ENCODE measurements at regions of chr13 and their contacts with region 1.

Region 1: DNA sequence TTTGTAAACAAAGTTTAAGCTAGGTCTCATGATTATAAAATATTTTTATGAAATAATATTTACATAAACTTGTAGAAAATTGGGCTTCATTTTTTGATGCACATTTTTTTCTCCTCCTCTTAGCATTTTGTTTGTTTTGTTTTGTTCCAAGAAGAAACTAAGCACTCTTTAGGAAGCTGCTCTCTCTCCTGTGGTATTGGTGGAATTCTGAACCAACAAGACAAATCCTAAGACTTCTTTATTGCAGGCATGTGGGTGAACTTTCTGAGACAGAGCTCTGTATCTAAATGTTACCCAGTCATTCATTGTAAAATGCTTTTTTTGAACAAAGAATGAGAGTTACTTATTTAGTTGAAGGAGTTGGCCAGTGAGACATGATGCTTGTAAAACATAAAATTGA is 39.3 kb downstream of the LMO7 start:
- DNase-seq: no peak
- ATAC-seq: no peak
- H3K4me3 ChIP-seq: no peak overlapping the region
- H3K27ac ChIP-seq: no peak overlapping the region
- H3K4me1 ChIP-seq: no peaks in the 10 kb centered on the region
- H3K27me3 ChIP-seq: no peaks in the 10 kb centered on the region
- CTCF ChIP-seq: no peak
- EP300 ChIP-seq: no peak
- POLR2A ChIP-seq: no peak
- RAD21 ChIP-seq: no peak

Region 2: GRCh38 chr13:75687150-75687763 is 11.8 kb after region 1 on chr13:
- CTCF ChIA-PET with region 1: interaction called, 17 read pairs
- POLR2A ChIA-PET with region 1: no interaction called
- RAD21 ChIA-PET with region 1: no interaction called
- SMC1A ChIA-PET with region 1: interaction called, 6 read pairs
- in situ Hi-C with region 1: no loop called
- intact Hi-C with region 1: no loop called
- DNase-seq: no peak
- ATAC-seq: peak; percentile 60
- H3K4me3 ChIP-seq: no peak overlapping the region
- H3K27ac ChIP-seq: no peak overlapping the region
- H3K4me1 ChIP-seq: no peaks in the 10 kb centered on the region
- H3K27me3 ChIP-seq: no peaks in the 10 kb centered on the region
- CTCF ChIP-seq: peak; percentile 23 to 39 (median 38); a peak in 5 of 6 replicates
- EP300 ChIP-seq: no peak
- POLR2A ChIP-seq: no peak
- RAD21 ChIP-seq: peak; percentile 47

Region 3: DNA sequence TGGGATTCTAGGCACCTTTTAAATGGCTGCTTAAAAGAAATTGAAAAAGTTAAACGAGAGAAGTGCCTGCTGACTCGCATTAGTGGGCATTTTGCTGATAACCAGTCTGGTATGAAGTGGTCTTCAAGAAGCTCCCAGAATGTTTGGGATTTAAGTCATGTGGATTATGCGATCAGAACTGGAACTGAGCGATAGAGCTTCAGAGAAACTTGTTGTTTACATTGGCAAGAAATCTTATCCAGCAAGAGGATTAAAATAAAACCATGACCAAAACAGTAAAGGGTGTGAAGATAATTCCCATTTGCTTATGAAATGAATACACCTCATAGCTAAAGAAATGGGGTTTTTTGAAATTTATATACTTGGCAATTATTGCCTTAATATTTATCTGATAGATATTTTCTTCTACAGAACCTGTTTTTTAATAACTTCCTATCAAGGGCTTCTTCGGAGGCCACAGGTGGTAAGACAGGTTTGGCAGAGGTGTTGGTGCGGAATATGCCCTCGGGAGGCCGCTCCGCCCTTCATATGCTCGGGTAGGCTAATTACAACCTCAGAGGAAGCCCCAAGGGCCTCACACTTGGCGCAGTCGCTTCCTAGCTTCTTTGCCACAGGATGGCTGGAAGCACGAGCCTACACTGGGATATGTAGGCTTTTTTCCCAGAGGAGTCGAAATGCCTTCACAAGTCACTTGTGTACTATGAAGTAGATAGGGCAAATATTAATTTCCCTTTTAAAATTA is 29.3 kb after region 1 on chr13:
- CTCF ChIA-PET with region 1: no interaction called
- POLR2A ChIA-PET with region 1: no interaction called
- RAD21 ChIA-PET with region 1: no interaction called
- SMC1A ChIA-PET with region 1: no interaction called
- in situ Hi-C with region 1: no loop called
- intact Hi-C with region 1: no loop called
- DNase-seq: no peak
- ATAC-seq: no peak
- H3K4me3 ChIP-seq: no peak overlapping the region
- H3K27ac ChIP-seq: no peak overlapping the region
- H3K4me1 ChIP-seq: no peaks in the 10 kb centered on the region
- H3K27me3 ChIP-seq: no peaks in the 10 kb centered on the region
- CTCF ChIP-seq: no peak
- EP300 ChIP-seq: no peak
- POLR2A ChIP-seq: no peak
- RAD21 ChIP-seq: no peak

Measured in GM12878 (cell line).